Transverse colon (tissue), 4 donors: ENCODE measurements at regions of chr20 and their contacts with region 1.

Region 1: DNA sequence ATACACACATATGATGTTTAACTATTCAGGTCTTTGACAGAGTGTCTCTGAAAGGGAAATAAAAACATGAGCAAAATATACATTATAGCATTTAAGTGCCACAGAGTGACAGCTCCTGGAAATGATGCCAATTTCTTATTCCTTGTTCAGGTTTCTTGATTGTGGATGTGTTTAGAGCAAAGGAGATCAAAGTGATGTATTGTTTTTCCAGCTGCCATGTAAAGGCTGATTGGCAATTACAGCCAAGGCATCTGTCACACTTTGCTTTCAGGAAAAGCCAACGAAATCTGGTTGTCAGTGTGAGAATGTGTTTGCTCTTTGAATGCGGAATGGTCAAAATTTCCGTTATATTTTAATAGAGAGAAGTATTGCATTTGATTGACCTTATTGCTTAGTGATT is 347.8 kb upstream of the FLRT3 start:
- DNase-seq: no peak
- H3K4me3 ChIP-seq: no peak overlapping the region
- H3K27ac ChIP-seq: no peak overlapping the region
- H3K4me1 ChIP-seq: no peaks in the 10 kb centered on the region
- H3K27me3 ChIP-seq: no peaks in the 10 kb centered on the region
- CTCF ChIP-seq: no peak
- EP300 ChIP-seq: no peak
- POLR2A ChIP-seq: no peak

Region 2: DNA sequence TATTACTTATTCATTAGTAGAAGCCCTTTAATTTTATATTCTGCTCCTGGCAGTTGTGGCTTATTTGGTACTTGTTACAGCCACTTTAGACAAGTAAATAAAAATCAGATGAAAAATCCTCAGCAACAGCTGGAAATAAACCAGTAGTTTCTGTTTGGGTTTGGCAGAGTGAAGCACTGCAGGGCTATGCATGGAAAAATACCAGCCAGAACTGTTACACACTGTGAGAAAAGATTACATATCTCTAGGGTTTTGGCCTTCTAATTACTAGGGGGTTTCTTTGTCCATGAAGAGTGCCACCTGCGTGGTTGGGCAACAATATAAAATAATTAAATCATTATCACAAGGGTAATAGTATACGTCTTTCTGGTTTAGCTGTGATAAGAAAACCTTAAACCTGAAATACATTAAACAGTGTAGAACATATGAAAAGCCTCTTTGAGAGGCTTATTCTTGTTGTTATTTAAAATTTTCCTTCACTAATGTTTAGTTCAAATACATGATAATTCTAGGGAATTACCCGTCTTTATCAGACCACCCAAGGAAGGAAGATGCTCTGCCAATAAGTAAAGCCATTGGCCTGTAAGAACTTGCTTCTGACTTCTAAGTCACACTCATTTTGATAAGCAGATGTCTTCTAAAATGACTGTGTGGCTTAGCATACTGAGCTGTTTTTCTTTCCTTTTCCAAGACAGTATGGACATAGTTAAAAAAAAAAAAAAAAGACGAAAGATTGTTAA is 27.7 kb before region 1 on chr20:
- in situ Hi-C with region 1: no loop called
- intact Hi-C with region 1: loop called (anchors 2 kb)
- DNase-seq: no peak
- H3K4me3 ChIP-seq: no peak overlapping the region
- H3K27ac ChIP-seq: no peak overlapping the region
- H3K4me1 ChIP-seq: no peaks in the 10 kb centered on the region
- H3K27me3 ChIP-seq: no peaks in the 10 kb centered on the region
- CTCF ChIP-seq: no peak
- EP300 ChIP-seq: no peak
- POLR2A ChIP-seq: no peak